Gastrocnemius medialis (tissue), 4 donors: ENCODE measurements at regions of chr5 and their contacts with region 1.

Region 1: DNA sequence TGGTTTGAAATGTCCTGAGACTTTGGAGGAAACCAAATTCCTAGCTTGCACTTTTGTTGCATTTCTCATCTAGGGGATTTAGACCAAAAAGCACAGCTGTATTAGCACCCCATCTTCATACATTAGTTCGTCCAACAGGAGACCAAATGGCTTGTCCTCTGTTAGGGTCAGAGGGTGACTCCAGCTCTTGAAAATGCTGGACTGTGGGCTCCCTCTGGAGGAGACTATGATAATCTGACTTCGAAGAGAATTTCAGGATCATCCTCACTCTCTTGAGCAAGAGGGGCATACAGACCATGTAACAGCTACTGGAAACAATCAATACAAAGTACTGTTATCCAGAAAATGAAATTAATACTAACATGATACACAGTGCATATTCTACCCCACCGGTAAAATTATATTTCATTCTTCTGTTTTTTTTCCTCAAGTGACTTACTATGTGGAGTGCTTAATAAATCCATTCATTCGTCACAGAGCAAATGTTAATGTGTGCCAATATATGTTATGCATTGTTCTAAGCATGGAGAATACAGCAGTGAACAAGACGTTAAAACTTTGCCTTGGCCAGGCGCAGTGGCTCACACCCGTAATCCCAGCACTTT is 63.7 kb upstream of the PPP2CA start:
- DNase-seq: peak; percentile 30 to 39
- ATAC-seq: peak; percentile 92 to 99
- H3K4me3 ChIP-seq: no peak overlapping the region
- H3K27ac ChIP-seq: no peak overlapping the region
- H3K4me1 ChIP-seq: no peaks in the 10 kb centered on the region
- H3K27me3 ChIP-seq: no peaks in the 10 kb centered on the region
- CTCF ChIP-seq: peak; percentile 65 to 83 (median 68)
- POLR2A ChIP-seq: no peak

Region 2: DNA sequence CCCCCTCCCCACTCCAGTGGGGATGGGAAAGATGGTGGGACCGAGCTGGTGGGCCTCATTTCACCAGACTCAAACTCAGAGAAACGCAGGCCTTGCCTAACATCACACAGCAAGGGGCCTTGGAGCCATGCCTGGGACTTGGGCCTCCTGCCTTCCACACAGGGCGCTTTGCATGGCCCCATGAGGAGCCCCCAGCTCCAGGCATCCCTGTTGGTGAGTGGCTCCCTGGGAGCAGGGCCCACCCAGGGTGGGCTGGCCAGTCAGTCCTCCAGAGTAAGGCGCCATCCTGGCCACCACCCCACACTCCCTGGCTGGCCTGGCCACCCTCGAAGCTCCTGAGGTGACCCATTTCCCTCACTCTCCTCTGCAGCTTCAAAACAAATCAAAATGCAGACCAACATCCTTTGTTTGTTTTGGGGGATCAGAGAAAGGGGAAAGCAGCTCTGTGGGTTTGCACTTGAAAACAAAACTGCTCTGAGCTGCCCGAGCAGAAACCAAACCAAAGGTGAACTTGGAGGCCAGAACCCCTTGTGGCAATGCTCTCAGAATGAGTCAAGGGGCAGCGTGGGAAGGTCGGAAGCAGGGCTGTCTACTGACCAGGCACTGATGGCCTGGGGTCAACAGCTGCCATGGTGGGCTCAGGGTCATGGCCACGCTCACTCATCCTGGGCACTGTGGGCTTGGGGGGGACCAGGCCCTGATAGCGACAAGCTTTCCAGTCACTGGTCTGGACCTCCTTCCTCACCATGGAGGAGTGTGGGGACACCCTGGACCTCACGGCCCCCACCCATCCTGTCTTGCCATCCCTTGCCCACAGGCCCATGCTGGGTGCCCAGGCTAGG is 247.8 kb before region 1 on chr5:
- in situ Hi-C with region 1: no loop called
- intact Hi-C with region 1: loop called (anchors 1 kb)
- DNase-seq: no peak
- ATAC-seq: no peak
- H3K4me3 ChIP-seq: no peak overlapping the region
- H3K27ac ChIP-seq: no peak overlapping the region
- H3K4me1 ChIP-seq: no peaks in the 10 kb centered on the region
- H3K27me3 ChIP-seq: no peaks in the 10 kb centered on the region
- CTCF ChIP-seq: no peak
- POLR2A ChIP-seq: no peak

Region 3: GRCh38 chr5:134101686-134102439 is 187.7 kb before region 1 on chr5:
- in situ Hi-C with region 1: no loop called
- intact Hi-C with region 1: loop called (anchors 1 kb)
- DNase-seq: peak in 1 of 2 donors; percentile 40
- ATAC-seq: peak; percentile 78 to 79
- H3K4me3 ChIP-seq: no peak overlapping the region
- H3K27ac ChIP-seq: no peak overlapping the region
- H3K4me1 ChIP-seq: no peaks in the 10 kb centered on the region
- H3K27me3 ChIP-seq: no peaks in the 10 kb centered on the region
- CTCF ChIP-seq: peak; percentile 66 to 95 (median 85)
- POLR2A ChIP-seq: no peak

Region 4: DNA sequence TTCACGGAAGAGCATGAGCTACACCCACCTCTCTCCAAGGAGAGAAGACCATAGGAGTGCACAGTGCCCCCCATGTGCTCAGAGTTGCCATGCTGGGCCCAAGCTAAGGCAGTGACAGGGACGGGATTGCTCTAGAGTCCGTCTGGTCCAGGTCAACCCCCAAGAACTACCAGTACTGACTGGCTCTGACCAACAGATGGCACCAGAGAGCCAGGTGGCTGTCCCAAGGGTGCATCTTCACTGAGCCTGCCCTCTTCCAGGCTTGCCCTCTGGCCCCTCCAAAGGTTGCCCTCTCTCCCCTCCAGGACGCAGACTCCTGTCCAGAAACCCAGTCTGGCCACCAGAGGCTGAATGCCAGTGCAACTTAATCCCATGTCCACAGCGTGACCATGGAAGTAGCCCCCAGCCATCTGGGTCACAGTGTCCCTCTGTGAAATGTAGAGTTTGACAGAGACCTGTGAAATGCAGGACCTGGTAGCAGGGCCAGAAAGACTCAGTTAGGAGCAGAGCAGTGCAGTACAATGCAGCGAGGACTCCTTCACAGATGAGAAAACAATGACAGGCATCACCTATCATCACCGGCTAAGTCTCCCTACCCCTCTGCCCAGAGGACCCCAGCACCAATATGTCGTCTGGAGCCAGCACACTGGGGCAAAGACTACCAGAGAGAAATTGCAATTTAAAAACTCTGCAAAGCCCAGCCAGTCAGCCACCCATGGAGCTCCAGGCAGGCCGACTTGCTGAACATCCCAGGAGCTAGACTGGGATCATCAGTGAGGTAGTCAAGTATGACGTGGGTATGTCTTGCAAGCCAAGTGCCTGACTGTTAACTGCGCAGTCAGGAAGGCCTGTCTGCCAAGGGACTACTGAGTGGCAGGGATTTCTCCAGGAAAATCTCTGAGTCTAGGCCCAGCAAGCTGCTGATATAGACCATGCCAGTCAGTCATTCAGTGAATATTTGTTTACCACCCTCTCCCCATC is 105.2 kb before region 1 on chr5:
- in situ Hi-C with region 1: loop called (anchors 5 kb)
- intact Hi-C with region 1: loop called (anchors 1 kb)
- DNase-seq: peak; percentile 47 to 68
- ATAC-seq: peak; percentile 83 to 84
- H3K4me3 ChIP-seq: no peak overlapping the region
- H3K27ac ChIP-seq: no peak overlapping the region
- H3K4me1 ChIP-seq: no peaks in the 10 kb centered on the region
- H3K27me3 ChIP-seq: no peaks in the 10 kb centered on the region
- CTCF ChIP-seq: peak; percentile 91 to 96 (median 93)
- POLR2A ChIP-seq: no peak

Region 5: DNA sequence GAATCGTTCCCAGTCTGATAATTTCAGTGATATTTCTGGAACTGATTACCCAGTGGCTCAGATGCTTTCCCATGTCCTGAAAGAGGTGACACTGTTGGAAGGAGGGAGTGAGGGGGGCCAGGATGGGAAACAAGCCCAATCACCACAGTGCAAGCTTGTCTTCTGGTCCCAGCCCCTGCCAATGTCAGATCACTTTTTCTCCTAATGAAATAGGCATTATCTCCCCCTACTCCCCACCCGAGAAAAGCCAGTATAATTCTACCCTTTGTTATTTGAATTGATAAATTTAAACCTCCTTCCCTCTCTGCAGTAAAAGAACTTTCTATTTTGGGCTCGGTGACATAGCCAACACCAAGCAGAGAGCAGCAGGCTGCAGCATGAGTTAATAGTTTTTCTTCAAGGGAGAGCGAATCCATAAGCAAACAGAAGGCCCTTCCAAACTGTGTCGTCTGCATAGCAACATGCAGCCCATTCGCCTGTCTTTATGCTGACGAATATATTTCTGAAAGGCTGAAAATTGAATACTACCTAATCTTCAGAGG is 49.1 kb before region 1 on chr5:
- in situ Hi-C with region 1: no loop called
- intact Hi-C with region 1: loop called (anchors 5 kb)
- DNase-seq: no peak
- ATAC-seq: peak; percentile 21 to 34
- H3K4me3 ChIP-seq: peak overlapping the region in 1 of 4 donors; percentile 3
- H3K27ac ChIP-seq: peak overlapping the region; percentile 79 to 82 (median 81)
- H3K4me1 ChIP-seq: peaks cover 43 to 47% of the 10 kb centered on the region in 2 donors
- H3K27me3 ChIP-seq: no peaks in the 10 kb centered on the region
- CTCF ChIP-seq: no peak
- POLR2A ChIP-seq: no peak

Region 6: DNA sequence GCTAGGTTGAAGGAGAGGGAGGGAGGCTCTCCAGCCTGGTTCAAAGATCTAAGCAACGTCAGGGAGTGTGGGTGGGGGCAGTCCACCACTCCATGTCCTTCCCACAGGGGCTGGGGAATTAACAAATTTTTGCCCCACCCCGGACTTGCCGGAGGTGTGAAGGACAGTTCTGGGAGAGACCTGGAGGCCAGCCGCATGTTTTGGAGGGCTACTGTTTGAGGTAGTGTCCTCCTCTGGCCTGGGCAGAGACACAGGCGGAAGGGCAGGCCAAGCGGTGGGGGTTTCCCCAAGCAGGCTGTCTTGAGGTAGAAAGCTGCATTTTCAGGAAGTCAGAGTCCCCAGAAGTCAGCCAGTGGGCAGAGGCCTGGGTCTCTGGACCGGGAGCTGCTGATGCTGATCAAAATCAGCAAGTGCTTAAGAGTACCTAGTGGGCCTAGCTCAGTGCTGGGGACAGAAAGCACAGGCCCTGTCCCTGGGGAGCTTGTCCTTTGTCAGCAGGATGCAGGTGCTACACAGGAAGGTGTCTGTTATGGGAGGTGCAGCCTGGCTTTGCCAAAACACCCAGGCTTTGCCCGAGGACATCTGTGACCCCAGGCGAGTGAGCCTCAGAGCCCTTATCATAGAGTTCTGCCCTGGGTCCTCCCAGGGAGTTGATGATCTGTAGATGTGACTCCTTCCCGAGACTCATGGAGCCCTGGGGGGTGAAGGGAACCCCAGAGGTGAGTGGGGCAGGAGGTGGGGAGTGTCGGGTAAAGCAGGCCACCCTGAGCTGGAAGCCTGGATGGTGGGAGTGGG is 254.4 kb after region 1 on chr5:
- in situ Hi-C with region 1: no loop called
- intact Hi-C with region 1: no loop called
- DNase-seq: no peak
- ATAC-seq: no peak
- H3K4me3 ChIP-seq: no peak overlapping the region
- H3K27ac ChIP-seq: peak overlapping the region; percentile 49 to 58 (median 58)
- H3K4me1 ChIP-seq: peaks cover 29 to 37% of the 10 kb centered on the region in 2 donors
- H3K27me3 ChIP-seq: no peaks in the 10 kb centered on the region
- CTCF ChIP-seq: no peak
- POLR2A ChIP-seq: no peak